PC-9 (cell line): ENCODE measurements at regions of chr7 and their contacts with region 1.

Region 1: DNA sequence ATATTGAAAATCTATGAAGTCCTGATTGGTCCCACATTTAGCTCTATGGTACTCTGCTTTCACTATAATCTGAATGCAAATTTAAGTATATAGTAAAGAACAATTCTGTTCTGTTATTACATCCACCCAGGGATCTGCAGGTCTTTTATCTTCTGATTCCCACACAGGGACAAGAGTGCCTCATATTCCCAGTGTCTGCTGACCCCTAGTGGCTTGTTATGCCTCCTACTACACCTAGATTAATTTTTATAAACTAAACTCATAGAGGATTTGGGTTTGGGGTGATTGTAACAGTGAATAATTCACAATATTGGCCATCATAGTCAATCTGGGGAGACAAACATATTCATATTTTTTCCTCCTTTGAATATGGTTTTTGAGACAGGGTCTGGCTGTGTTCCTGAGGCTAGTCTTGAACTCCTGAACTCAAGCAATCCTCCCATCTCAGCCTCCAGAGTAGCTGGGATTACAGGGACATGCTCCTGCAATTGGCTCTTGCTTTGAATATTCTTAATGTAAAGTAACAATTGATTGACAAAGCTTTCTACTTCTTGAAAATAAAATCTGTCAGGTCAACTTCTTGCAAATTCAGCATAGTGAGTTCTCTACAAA is 282.1 kb downstream of the KCND2 start:
- DNase-seq: peak; percentile 42 to 47
- H3K4me3 ChIP-seq: no peak overlapping the region
- H3K27ac ChIP-seq: no peak overlapping the region
- H3K4me1 ChIP-seq: no peaks in the 10 kb centered on the region
- H3K27me3 ChIP-seq: no peaks in the 10 kb centered on the region
- CTCF ChIP-seq: peak; percentile 90

Region 2: GRCh38 chr7:118836933-118837332 is 1718.1 kb before region 1 on chr7:
- CTCF ChIA-PET with region 1: no interaction called
- POLR2A ChIA-PET with region 1: no interaction called
- intact Hi-C with region 1: no loop called
- DNase-seq: no peak
- H3K4me3 ChIP-seq: no peak overlapping the region
- H3K27ac ChIP-seq: no peak overlapping the region
- H3K4me1 ChIP-seq: no peaks in the 10 kb centered on the region
- H3K27me3 ChIP-seq: no peaks in the 10 kb centered on the region
- CTCF ChIP-seq: no peak

Region 3: GRCh38 chr7:118918556-118918955 is 1636.5 kb before region 1 on chr7:
- CTCF ChIA-PET with region 1: no interaction called
- POLR2A ChIA-PET with region 1: no interaction called
- intact Hi-C with region 1: loop called (anchors 1 kb)
- DNase-seq: peak in 1 of 2 experiments; percentile 42
- H3K4me3 ChIP-seq: no peak overlapping the region
- H3K27ac ChIP-seq: no peak overlapping the region
- H3K4me1 ChIP-seq: no peaks in the 10 kb centered on the region
- H3K27me3 ChIP-seq: no peaks in the 10 kb centered on the region
- CTCF ChIP-seq: peak; percentile 72

Region 4: GRCh38 chr7:119270045-119270464 is 1285.0 kb before region 1 on chr7:
- CTCF ChIA-PET with region 1: no interaction called
- POLR2A ChIA-PET with region 1: no interaction called
- intact Hi-C with region 1: loop called (anchors 2 kb)
- DNase-seq: peak; percentile 49 to 58
- H3K4me3 ChIP-seq: no peak overlapping the region
- H3K27ac ChIP-seq: no peak overlapping the region
- H3K4me1 ChIP-seq: no peaks in the 10 kb centered on the region
- H3K27me3 ChIP-seq: no peaks in the 10 kb centered on the region
- CTCF ChIP-seq: peak; percentile 91

Region 5: DNA sequence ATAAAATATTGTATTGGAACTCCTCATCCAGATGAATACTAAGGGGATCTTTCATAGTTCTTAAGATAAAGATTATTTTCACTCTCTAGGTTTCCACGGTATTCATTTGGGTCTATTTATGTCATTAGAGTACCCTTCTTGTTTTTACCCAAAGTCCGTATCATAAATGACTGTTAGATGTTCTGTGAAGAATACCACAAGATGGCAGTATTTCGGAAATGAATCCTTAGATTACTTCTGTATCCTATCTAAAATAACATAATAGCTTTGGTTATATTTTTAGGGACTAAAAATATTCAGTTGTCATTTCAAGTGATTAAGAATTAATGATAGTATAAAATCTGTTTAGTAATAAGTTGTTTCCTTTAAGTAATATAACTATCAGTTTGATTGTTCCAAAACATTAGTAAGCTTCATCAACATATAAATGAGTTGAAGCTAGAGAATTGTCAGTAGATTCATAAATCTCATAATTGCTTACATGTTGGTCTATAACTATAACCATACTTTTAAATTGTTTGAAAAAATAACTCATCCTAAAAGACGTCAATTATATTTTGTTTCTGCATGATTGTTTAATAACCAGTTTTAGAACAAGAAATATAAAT is 619.5 kb before region 1 on chr7:
- CTCF ChIA-PET with region 1: no interaction called
- POLR2A ChIA-PET with region 1: no interaction called
- intact Hi-C with region 1: loop called (anchors 1 kb)
- DNase-seq: no peak
- H3K4me3 ChIP-seq: no peak overlapping the region
- H3K27ac ChIP-seq: no peak overlapping the region
- H3K4me1 ChIP-seq: no peaks in the 10 kb centered on the region
- H3K27me3 ChIP-seq: no peaks in the 10 kb centered on the region
- CTCF ChIP-seq: peak; percentile 70

Region 6: DNA sequence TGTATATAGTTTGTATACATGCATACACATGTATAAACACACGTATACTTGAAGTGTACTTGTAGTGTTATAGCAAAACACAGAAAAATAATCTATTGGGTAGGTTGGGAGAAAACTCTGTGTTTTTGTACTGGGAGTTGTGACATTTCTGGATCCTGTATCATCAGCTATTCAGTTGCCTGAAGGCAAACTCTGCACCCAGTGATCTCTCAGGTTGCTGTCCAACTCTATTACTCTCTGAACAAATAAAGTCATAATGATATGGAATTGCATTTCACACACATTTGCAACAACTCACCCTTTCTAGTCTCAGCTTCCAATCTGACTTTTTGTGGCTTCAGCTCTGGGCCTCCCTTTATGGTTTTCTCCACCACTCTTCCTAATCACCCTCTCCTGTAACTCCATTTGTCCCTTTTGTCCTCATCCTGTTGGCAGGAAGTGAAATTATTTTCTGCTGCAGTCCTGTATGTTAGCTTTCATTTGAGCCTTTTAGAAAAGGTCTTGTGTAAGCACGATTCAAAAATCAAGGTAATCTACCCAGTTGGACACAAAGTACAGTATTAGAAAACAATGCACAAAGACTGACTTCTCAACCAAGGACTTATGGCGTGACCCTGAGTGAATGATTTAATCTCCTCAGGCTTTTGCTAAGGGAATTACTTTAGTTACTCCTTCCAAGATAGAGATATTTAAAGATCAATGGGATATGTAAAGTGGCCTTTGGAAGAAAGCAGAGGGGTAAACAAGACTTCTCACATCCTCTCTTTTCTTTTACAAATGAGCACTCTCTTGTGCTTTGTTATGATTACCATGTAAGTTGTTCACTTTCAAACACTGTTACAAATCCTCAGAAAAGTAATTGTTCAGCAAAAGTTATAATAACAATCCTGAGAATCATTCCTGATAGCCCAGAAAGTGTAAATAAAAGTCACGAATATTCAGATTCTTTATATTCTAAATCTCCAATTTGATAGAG is 33.0 kb before region 1 on chr7:
- CTCF ChIA-PET with region 1: no interaction called
- POLR2A ChIA-PET with region 1: no interaction called
- intact Hi-C with region 1: no loop called
- DNase-seq: peak; percentile 5 to 48
- H3K4me3 ChIP-seq: no peak overlapping the region
- H3K27ac ChIP-seq: peak overlapping the region; percentile 40; the same call in 1 of the 2 replicates
- H3K4me1 ChIP-seq: 0 out of 2 replicates have a peak, but pooled peaks cover 9% of the 10 kb centered on the region
- H3K27me3 ChIP-seq: no peaks in the 10 kb centered on the region
- CTCF ChIP-seq: no peak